Activated CD8-positive, alpha-beta T cell treated with anti-CD3 and anti-CD28 coated beads for 36 hours (primary cell): ENCODE measurements at regions of chr3 and their contacts with region 1.

Region 1: DNA sequence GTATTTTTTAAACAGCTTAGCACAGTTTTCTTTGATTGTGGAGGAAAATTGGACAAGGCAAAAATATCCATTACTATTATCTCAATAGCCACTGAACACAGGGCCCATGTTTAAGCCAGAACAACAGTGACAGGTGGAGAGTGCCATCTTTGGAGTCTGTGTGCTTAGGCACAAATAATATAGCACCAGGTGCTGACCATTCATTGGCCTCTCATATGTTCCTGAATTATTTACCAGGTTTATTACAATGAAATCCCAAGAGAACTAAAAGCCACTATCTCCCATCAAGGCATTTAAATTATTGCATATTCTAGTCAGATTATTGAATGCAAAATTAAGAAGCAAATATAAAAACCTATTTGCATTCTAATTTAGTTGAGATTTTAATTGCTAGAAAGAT is 39.6 kb downstream of the GPR156 start:
- DNase-seq: no peak
- ATAC-seq: no peak
- H3K4me3 Mint-ChIP-seq: no peak overlapping the region
- H3K27ac Mint-ChIP-seq: no peak overlapping the region
- H3K4me1 Mint-ChIP-seq: no peaks in the 10 kb centered on the region
- H3K27me3 Mint-ChIP-seq: peaks cover 12% of the 10 kb centered on the region
- CTCF ChIP-seq: no peak

Region 2: DNA sequence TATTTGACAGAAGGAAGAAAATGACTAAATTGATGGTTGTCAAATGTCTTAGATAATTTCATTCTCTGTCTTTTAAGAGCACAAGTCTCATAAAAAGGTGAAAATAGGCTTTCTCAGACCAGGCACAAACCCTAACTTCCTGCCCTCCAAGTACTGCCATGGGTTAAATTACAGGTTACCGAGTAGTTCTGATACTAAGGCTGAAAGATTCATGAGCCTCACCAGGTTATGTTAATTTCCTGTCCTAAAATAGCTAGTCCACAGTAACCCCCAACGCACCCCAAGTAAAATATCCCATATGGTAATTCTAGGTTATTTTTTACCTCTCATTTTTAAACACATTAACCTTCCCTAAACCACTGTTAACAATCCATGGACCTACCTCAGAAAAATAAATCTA is 193.2 kb before region 1 on chr3:
- CTCF ChIA-PET with region 1: no interaction called
- POLR2A ChIA-PET with region 1: no interaction called
- intact Hi-C with region 1: no loop called
- DNase-seq: no peak
- ATAC-seq: peak; percentile 77
- H3K4me3 Mint-ChIP-seq: no peak overlapping the region
- H3K27ac Mint-ChIP-seq: peak overlapping the region; percentile 18
- H3K4me1 Mint-ChIP-seq: peaks cover 71% of the 10 kb centered on the region
- H3K27me3 Mint-ChIP-seq: no peaks in the 10 kb centered on the region
- CTCF ChIP-seq: no peak

Region 3: GRCh38 chr3:120410541-120410940 is 165.2 kb after region 1 on chr3:
- CTCF ChIA-PET with region 1: interaction called, 131 read pairs
- POLR2A ChIA-PET with region 1: no interaction called
- intact Hi-C with region 1: no loop called
- DNase-seq: no peak
- ATAC-seq: no peak
- H3K4me3 Mint-ChIP-seq: no peak overlapping the region
- H3K27ac Mint-ChIP-seq: no peak overlapping the region
- H3K4me1 Mint-ChIP-seq: no peaks in the 10 kb centered on the region
- H3K27me3 Mint-ChIP-seq: no peaks in the 10 kb centered on the region
- CTCF ChIP-seq: no peak

Region 4: DNA sequence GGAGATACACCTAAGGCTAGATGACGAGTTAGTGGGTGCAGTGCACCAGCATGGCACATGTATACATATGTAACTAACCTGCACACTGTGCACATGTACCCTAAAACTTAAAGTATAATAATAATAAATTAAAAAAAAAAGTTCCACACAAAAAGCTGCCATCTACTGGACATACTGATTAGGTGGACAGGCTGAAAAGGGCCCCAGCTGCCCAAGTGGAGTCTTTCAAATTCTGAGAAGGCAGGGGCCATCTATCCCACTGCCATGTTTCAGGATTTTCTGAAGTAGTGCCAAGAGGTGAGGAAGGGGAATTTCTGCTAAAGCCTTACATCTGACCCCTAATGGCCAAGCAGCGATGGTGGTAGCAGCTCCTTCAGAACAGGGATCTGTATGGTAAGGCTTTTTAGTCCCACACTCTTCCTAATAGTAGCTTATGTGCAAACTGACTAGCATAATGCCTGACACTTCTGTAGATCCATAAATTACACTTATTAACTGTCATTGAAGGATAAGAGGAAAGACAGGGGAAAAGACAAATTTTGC is 197.7 kb after region 1 on chr3:
- CTCF ChIA-PET with region 1: interaction called, 15 read pairs
- POLR2A ChIA-PET with region 1: no interaction called
- intact Hi-C with region 1: no loop called
- DNase-seq: no peak
- ATAC-seq: no peak
- H3K4me3 Mint-ChIP-seq: no peak overlapping the region
- H3K27ac Mint-ChIP-seq: no peak overlapping the region
- H3K4me1 Mint-ChIP-seq: no peaks in the 10 kb centered on the region
- H3K27me3 Mint-ChIP-seq: peaks cover 12% of the 10 kb centered on the region
- CTCF ChIP-seq: no peak

Region 5: GRCh38 chr3:120558771-120559241 is 313.4 kb after region 1 on chr3:
- CTCF ChIA-PET with region 1: interaction called, 26 read pairs
- POLR2A ChIA-PET with region 1: no interaction called
- intact Hi-C with region 1: loop called (anchors 5 kb)
- DNase-seq: peak; percentile 88
- ATAC-seq: peak; percentile 84
- H3K4me3 Mint-ChIP-seq: peak overlapping the region; percentile 73
- H3K27ac Mint-ChIP-seq: peak overlapping the region; percentile 39
- H3K4me1 Mint-ChIP-seq: peaks cover 15% of the 10 kb centered on the region
- H3K27me3 Mint-ChIP-seq: peaks cover 12% of the 10 kb centered on the region
- CTCF ChIP-seq: peak; percentile 94